PC-3 (cell line): ENCODE measurements at regions of chr16 and their contacts with region 1.

Region 1: GRCh38 chr16:29862884-29863668 is at the start of gene CDIPT:
- DNase-seq: peak; percentile 93
- ATAC-seq: peak; percentile 98
- H3K4me3 ChIP-seq: peak within 1 kb of the TSS; percentile 78
- H3K27ac ChIP-seq: peak within 1 kb of the TSS; percentile 65
- H3K4me1 ChIP-seq: no peaks in the 10 kb centered on the region
- H3K27me3 ChIP-seq: no peaks in the 10 kb centered on the region
- CTCF ChIP-seq: peak; percentile 74
- total RNA-seq, gene CDIPT: 60.5 and 86.2 TPM in 2 replicates

Region 2: DNA sequence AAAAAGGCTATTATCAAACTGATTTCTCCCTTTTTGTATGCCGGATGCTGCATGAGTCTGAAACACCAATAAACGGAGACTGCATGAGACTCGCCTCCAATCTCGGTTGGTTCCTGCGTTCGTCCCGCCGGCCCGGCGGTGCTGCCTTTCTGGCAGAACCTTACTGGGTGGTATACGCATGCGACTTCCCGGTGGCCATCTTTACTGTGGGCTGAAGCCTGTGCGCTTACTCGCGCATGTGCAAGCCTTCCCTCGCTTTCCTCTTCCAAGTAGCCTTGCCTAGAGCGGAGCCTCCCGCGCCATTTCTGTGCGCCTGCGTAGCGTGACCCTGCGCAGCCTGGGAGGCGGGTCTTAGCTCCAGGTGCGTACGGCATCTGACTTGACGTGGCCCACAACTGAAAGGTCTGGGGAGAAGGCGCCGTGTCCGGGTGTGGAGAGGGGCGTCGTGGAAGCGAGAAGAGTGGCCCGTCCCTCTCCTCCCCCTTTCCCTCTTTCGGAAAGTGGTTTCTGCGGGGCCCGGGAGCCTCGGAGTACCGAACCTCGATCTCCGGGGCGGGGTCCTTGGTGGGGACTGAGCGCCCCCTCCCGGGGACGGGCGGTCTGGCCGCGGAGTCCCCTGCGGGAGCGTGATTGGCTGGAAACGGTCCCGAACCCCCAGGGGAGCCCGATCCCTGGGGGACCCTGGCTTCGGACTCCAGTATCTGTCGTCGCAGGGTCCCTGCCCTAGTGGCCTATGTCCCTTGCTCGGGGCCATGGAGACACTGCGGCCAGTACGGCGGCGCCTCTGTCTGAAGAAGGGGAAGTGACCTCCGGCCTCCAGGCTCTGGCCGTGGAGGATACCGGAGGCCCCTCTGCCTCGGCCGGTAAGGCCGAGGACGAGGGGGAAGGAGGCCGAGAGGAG is 47.0 kb before region 1 on chr16 and contains the start of gene PAGR1:
- CTCF ChIA-PET with region 1: interaction called, 3 read pairs
- POLR2A ChIA-PET with region 1: no interaction called
- intact Hi-C with region 1: loop called (anchors 5 kb)
- DNase-seq: peak; percentile 97
- ATAC-seq: peak; percentile 57
- H3K4me3 ChIP-seq: peak within 1 kb of the TSS; percentile 95
- H3K27ac ChIP-seq: peak within 1 kb of the TSS; percentile 70
- H3K4me1 ChIP-seq: peaks cover 44% of the 10 kb centered on the region
- H3K27me3 ChIP-seq: no peaks in the 10 kb centered on the region
- CTCF ChIP-seq: peak; percentile 73
- total RNA-seq, gene PAGR1: 53.8 and 76.7 TPM in 2 replicates

Region 3: DNA sequence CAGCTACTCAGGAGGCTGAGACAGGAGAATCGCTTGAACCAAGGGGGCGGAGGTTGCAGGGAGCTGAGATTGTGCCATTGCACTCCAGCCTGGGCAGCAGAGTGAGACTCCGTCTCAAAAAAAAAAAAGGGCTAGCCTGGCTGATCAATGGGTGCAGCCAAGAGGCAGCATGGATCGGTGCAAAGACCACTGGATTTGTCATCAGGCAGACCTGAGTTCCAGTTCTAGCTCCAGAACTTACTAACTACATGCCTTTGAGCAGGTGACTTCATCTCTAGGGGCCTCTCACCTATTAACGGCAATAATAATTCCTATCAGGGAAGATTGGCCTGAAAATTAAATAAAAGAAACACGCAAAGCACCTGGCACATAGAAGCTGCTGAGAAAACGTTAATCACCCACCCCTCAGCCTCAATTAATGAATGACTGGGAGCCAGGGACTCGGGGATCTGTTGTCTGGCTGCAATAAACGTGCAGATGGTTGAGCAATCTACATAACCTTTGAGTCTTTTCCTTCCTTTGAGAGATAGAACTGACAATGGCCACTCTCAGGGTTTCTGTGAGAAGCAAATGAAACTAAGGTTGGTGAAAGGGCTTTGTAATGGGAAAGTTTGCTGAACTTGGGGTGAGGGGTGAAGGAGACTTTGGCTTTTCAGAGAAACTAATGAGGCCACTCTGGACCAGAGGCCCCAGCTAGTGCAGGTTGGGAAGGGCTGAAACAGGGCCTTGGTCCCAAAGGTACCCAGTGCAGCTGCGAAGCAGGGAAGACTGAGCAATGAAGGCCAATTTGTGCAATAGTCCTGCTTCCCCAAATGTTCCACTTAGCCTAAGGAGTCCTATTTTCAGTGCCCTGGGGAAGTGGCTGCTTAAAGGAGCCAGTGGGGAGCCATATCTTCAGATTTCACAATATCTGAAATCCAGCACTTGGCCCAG is 28.7 kb after region 1 on chr16:
- CTCF ChIA-PET with region 1: no interaction called
- POLR2A ChIA-PET with region 1: no interaction called
- intact Hi-C with region 1: no loop called
- DNase-seq: no peak
- ATAC-seq: no peak
- H3K4me3 ChIP-seq: no peak overlapping the region
- H3K27ac ChIP-seq: no peak overlapping the region
- H3K4me1 ChIP-seq: no peaks in the 10 kb centered on the region
- H3K27me3 ChIP-seq: no peaks in the 10 kb centered on the region
- CTCF ChIP-seq: no peak

Region 4: DNA sequence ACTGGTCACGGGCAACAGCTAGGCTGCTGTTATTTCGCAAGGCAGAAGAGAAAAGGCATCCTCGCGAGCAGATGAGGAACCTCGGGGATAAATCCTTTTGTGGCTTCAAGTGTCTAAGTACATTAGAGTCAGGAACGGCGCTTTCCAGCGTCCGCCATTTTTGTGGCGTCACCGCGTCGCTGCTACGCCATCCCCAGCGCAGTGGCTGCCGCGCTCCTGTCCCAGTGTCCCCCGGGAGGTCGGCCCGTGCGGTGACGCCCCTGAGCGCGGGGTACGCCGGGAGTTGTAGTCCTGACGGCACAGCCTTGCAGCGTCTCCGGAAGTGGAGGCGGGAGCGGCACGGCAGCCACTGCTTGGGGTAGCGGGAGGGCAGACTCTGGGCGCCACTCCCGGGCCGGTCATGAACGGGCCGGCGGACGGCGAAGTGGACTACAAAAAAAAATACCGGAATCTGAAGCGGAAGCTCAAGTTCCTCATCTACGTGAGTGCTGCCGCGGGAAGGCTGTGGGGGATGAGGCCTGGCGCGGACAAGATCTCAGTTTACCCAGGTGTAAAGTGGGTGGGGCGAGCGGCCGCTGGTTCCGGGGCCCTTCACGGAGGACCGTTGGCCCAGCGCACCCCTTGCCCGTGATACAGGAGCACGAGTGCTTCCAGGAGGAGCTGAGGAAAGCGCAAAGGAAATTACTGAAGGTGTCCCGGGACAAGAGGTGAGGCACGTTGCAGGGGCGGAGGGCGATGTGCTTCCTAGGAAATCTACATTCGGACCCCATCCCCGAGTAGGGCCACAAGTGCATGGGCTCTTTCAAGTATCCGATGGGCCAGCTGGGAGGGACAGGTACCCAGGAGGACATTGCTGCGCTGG is 133.1 kb after region 1 on chr16 and contains the start of gene INO80E:
- CTCF ChIA-PET with region 1: no interaction called
- POLR2A ChIA-PET with region 1: no interaction called
- intact Hi-C with region 1: loop called (anchors 2 kb)
- DNase-seq: peak; percentile 94
- ATAC-seq: peak; percentile 94
- H3K4me3 ChIP-seq: peak within 1 kb of the TSS; percentile 91
- H3K27ac ChIP-seq: peak within 1 kb of the TSS; percentile 92
- H3K4me1 ChIP-seq: peaks cover 24% of the 10 kb centered on the region
- H3K27me3 ChIP-seq: no peaks in the 10 kb centered on the region
- CTCF ChIP-seq: no peak
- total RNA-seq, gene INO80E: 60.6 and 70.3 TPM in 2 replicates

Region 5: DNA sequence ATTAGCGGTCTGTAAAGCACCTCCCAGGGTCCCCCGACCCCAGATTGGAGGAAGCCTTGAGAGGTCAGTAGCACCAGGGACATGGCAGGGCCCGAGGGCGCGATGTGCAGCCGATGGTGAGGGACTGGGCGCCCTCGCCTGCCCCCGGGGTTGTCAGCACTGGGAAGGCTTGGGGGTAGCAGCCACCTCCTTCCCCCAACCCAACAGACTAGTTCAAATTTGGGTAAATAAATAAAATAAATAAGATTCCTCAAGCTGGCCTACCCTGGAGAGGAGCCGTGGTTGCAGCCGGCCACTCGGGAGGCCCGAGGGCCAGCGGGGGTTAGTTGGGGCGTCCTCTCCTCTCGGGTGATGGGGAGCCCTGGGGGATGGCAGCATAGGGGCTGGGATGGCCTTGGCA is 161.4 kb after region 1 on chr16:
- CTCF ChIA-PET with region 1: no interaction called
- POLR2A ChIA-PET with region 1: no interaction called
- intact Hi-C with region 1: loop called (anchors 5 kb)
- DNase-seq: no peak
- ATAC-seq: no peak
- H3K4me3 ChIP-seq: no peak overlapping the region
- H3K27ac ChIP-seq: no peak overlapping the region
- H3K4me1 ChIP-seq: no peaks in the 10 kb centered on the region
- H3K27me3 ChIP-seq: no peaks in the 10 kb centered on the region
- CTCF ChIP-seq: no peak

Region 6: GRCh38 chr16:30091474-30092372 is 228.6 kb after region 1 on chr16 and contains the start of gene TBX6:
- CTCF ChIA-PET with region 1: no interaction called
- POLR2A ChIA-PET with region 1: no interaction called
- intact Hi-C with region 1: no loop called
- DNase-seq: peak; percentile 87
- ATAC-seq: peak; percentile 81
- H3K4me3 ChIP-seq: peak within 1 kb of the TSS; percentile 78
- H3K27ac ChIP-seq: peak within 1 kb of the TSS; percentile 89
- H3K4me1 ChIP-seq: peaks cover 31% of the 10 kb centered on the region
- H3K27me3 ChIP-seq: no peaks in the 10 kb centered on the region
- CTCF ChIP-seq: peak; percentile 60
- total RNA-seq, gene TBX6: 0.86 and 1.1 TPM in 2 replicates